Activated B cell treated with CpG ODN at 0.5 μM for 24 hours (primary cell): ENCODE measurements at regions of chr13 and their contacts with region 1.

Region 1: GRCh38 chr13:100235311-100235901 is 146.5 kb downstream of the PCCA start:
- DNase-seq: no peak
- ATAC-seq: peak; percentile 45
- H3K4me3 Mint-ChIP-seq: peak overlapping the region; percentile 3
- H3K27ac Mint-ChIP-seq: no peak overlapping the region
- H3K4me1 Mint-ChIP-seq: peaks cover 7% of the 10 kb centered on the region
- H3K27me3 Mint-ChIP-seq: no peaks in the 10 kb centered on the region
- CTCF ChIP-seq: no peak

Region 2: GRCh38 chr13:99176309-99177276 is 1058.8 kb before region 1 on chr13:
- CTCF ChIA-PET with region 1: no interaction called
- POLR2A ChIA-PET with region 1: no interaction called
- intact Hi-C with region 1: loop called (anchors 10 kb)
- DNase-seq: peak; percentile 64
- ATAC-seq: peak; percentile 90
- H3K4me3 Mint-ChIP-seq: peak overlapping the region; percentile 58
- H3K27ac Mint-ChIP-seq: peak overlapping the region; percentile 24
- H3K4me1 Mint-ChIP-seq: peaks cover 43% of the 10 kb centered on the region
- H3K27me3 Mint-ChIP-seq: peaks cover 2% of the 10 kb centered on the region
- CTCF ChIP-seq: no peak

Region 3: GRCh38 chr13:99528547-99528946 is 706.9 kb before region 1 on chr13:
- CTCF ChIA-PET with region 1: no interaction called
- POLR2A ChIA-PET with region 1: no interaction called
- intact Hi-C with region 1: loop called (anchors 1 kb)
- DNase-seq: no peak
- ATAC-seq: peak; percentile 79
- H3K4me3 Mint-ChIP-seq: no peak overlapping the region
- H3K27ac Mint-ChIP-seq: no peak overlapping the region
- H3K4me1 Mint-ChIP-seq: peaks cover 16% of the 10 kb centered on the region
- H3K27me3 Mint-ChIP-seq: no peaks in the 10 kb centered on the region
- CTCF ChIP-seq: no peak

Region 4: GRCh38 chr13:99900960-99901359 is 334.4 kb before region 1 on chr13:
- CTCF ChIA-PET with region 1: interaction called, 8 read pairs
- POLR2A ChIA-PET with region 1: no interaction called
- intact Hi-C with region 1: loop called (anchors 1 kb)
- DNase-seq: no peak
- ATAC-seq: no peak
- H3K4me3 Mint-ChIP-seq: no peak overlapping the region
- H3K27ac Mint-ChIP-seq: no peak overlapping the region
- H3K4me1 Mint-ChIP-seq: no peaks in the 10 kb centered on the region
- H3K27me3 Mint-ChIP-seq: peaks cover 62% of the 10 kb centered on the region
- CTCF ChIP-seq: no peak

Region 5: GRCh38 chr13:99916366-99917103 is 318.9 kb before region 1 on chr13:
- CTCF ChIA-PET with region 1: interaction called, 11 read pairs
- POLR2A ChIA-PET with region 1: no interaction called
- intact Hi-C with region 1: no loop called
- DNase-seq: no peak
- ATAC-seq: peak; percentile 56
- H3K4me3 Mint-ChIP-seq: no peak overlapping the region
- H3K27ac Mint-ChIP-seq: no peak overlapping the region
- H3K4me1 Mint-ChIP-seq: peaks cover 1% of the 10 kb centered on the region
- H3K27me3 Mint-ChIP-seq: peaks cover 25% of the 10 kb centered on the region
- CTCF ChIP-seq: peak; percentile 62

Region 6: GRCh38 chr13:99995589-99996380 is 239.6 kb before region 1 on chr13:
- CTCF ChIA-PET with region 1: no interaction called
- POLR2A ChIA-PET with region 1: no interaction called
- intact Hi-C with region 1: loop called (anchors 10 kb)
- DNase-seq: no peak
- ATAC-seq: no peak
- H3K4me3 Mint-ChIP-seq: no peak overlapping the region
- H3K27ac Mint-ChIP-seq: no peak overlapping the region
- H3K4me1 Mint-ChIP-seq: peaks cover under 1% of the 10 kb centered on the region
- H3K27me3 Mint-ChIP-seq: peaks cover 68% of the 10 kb centered on the region
- CTCF ChIP-seq: no peak

Region 7: DNA sequence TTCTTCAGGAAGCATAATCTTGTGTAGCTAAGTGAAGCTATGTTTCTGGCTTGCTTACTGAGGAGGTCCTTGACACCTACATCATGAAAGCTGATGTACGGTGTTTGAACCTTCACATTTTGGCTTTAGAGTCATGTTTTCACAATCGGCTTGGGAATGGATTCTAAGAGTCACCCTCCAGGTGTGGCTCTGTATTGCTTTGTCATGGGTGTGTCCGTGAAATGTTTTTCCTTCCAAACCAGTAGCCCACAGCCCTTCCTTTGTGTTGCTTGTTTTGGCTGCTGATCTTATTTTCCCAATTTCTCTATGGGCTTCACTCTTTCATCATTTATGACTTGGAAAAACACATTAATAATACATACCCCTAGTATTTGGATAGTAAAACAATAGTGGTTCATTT is 112.5 kb after region 1 on chr13:
- CTCF ChIA-PET with region 1: no interaction called
- POLR2A ChIA-PET with region 1: no interaction called
- intact Hi-C with region 1: no loop called
- DNase-seq: no peak
- ATAC-seq: no peak
- H3K4me3 Mint-ChIP-seq: no peak overlapping the region
- H3K27ac Mint-ChIP-seq: no peak overlapping the region
- H3K4me1 Mint-ChIP-seq: no peaks in the 10 kb centered on the region
- H3K27me3 Mint-ChIP-seq: no peaks in the 10 kb centered on the region
- CTCF ChIP-seq: no peak